PC-3 (cell line): ENCODE measurements at regions of chr22 and their contacts with region 1.

Region 1: DNA sequence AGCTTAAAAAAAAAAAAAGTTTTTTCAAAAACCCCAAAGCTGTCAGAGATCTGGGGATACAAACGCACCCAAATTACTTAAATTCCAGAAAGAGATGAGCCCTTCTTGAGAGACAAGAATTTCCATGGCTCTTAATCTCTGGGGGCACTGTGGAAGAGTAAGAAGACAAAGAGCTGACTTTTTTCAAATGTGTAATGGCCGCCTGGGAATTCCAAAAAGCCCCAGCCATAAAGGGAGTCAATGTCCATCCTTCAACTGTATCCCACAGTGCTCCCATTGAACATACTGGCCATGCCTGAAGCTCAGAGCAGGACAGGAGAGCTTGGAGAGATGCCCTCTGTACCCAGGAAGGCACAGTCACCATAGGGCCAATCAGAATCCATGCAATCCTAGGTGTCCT is 37.4 kb upstream of the ASPHD2 start:
- DNase-seq: no peak
- ATAC-seq: no peak
- H3K4me3 ChIP-seq: no peak overlapping the region
- H3K27ac ChIP-seq: no peak overlapping the region
- H3K4me1 ChIP-seq: no peaks in the 10 kb centered on the region
- H3K27me3 ChIP-seq: peaks cover 14% of the 10 kb centered on the region
- CTCF ChIP-seq: no peak

Region 2: GRCh38 chr22:26416256-26416655 is 24.6 kb after region 1 on chr22:
- CTCF ChIA-PET with region 1: interaction called, 12 read pairs
- POLR2A ChIA-PET with region 1: no interaction called
- intact Hi-C with region 1: no loop called
- DNase-seq: no peak
- ATAC-seq: no peak
- H3K4me3 ChIP-seq: no peak overlapping the region
- H3K27ac ChIP-seq: no peak overlapping the region
- H3K4me1 ChIP-seq: peaks cover 20% of the 10 kb centered on the region
- H3K27me3 ChIP-seq: peaks cover 11% of the 10 kb centered on the region
- CTCF ChIP-seq: no peak

Region 3: DNA sequence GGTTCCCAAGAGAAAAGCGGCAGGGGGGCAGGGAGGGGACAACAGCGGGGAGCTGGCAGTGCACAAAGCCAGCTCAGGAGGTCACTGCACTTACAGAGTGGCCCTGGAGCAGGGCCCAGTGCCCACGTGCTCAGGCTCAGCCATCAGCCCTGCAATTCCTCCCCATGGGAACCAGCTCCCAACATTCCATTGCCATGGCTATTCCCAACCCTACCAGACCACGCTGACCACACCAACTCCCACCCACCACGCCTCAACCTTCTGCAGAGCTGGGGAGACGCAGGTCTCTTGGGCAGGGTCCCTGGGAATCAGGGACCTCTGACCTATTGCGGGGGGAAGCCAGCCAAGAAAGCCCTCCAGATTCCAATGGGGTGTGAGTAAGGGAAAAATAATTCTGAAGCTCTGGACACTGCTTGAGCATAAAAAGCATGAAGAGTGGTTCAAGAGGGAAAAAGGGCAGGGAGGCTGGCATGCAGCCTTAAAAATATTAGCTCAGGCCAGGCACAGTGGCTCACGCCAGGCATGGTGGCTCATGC is 158.9 kb after region 1 on chr22:
- CTCF ChIA-PET with region 1: no interaction called
- POLR2A ChIA-PET with region 1: no interaction called
- intact Hi-C with region 1: no loop called
- DNase-seq: peak; percentile 3
- ATAC-seq: no peak
- H3K4me3 ChIP-seq: no peak overlapping the region
- H3K27ac ChIP-seq: no peak overlapping the region
- H3K4me1 ChIP-seq: no peaks in the 10 kb centered on the region
- H3K27me3 ChIP-seq: no peaks in the 10 kb centered on the region
- CTCF ChIP-seq: no peak

Region 4: GRCh38 chr22:26711205-26711963 is 319.8 kb after region 1 on chr22:
- CTCF ChIA-PET with region 1: no interaction called
- POLR2A ChIA-PET with region 1: no interaction called
- intact Hi-C with region 1: no loop called
- DNase-seq: no peak
- ATAC-seq: no peak
- H3K4me3 ChIP-seq: no peak overlapping the region
- H3K27ac ChIP-seq: no peak overlapping the region
- H3K4me1 ChIP-seq: no peaks in the 10 kb centered on the region
- H3K27me3 ChIP-seq: no peaks in the 10 kb centered on the region
- CTCF ChIP-seq: no peak